HCT116 (cell line): ENCODE measurements at regions of chr9 and their contacts with region 1.

Region 1: DNA sequence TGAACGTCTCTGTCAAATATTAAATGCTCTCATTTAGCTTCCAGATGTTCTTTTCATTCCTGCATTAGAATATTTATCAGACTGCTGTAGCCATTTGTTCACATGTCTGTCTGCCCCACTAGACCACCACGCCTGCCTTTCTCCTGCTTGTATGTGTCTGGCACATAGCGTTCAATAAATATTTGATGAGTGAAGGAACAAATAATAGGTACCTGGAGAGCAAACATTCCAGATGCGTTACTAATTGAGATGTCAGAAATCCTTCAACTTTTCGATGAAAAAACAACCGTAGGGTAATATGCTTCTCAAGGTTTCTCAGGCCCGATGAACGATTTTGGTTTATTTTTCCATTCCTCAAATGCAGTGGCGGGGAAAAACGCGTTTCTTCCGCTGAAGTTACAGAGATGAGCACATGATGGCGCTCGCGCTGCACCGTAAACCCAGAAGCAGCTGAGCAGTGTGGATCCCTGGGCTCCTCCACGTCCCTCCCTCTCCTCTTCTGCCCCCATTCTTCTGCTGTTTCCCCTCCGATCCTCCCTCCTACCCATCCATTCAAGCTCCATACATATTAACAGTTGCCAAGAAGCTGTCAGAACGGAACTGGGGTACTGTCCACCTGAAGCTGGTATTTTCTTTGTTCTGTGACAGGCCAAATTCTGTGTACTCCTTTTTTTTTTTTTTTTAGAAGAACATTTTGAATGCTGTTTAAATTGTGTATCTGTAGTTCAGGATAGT is 245.4 kb downstream of the MPDZ start:
- DNase-seq: peak; percentile 51
- ATAC-seq: peak; percentile 97
- H3K4me3 ChIP-seq: no peak overlapping the region
- H3K27ac ChIP-seq: no peak overlapping the region
- H3K4me1 ChIP-seq: no peaks in the 10 kb centered on the region; a peak in 1 of 4 replicates
- H3K27me3 ChIP-seq: peaks cover 4% of the 10 kb centered on the region; the same call in 1 of the 2 replicates
- CTCF ChIP-seq: peak; percentile 46 to 78 (median 66); a peak in 5 of 6 replicates
- POLR2A ChIP-seq: no peak
- RAD21 ChIP-seq: peak; percentile 86

Region 2: GRCh38 chr9:12702160-12702758 is 331.9 kb before region 1 on chr9:
- CTCF ChIA-PET with region 1: no interaction called
- POLR2A ChIA-PET with region 1: no interaction called
- RAD21 ChIA-PET with region 1: no interaction called
- intact Hi-C with region 1: loop called (anchors 5 kb)
- DNase-seq: peak; percentile 56
- ATAC-seq: peak; percentile 91
- H3K4me3 ChIP-seq: no peak overlapping the region
- H3K27ac ChIP-seq: no peak overlapping the region
- H3K4me1 ChIP-seq: no peaks in the 10 kb centered on the region
- H3K27me3 ChIP-seq: 0 out of 2 replicates have a peak, but pooled peaks cover 4% of the 10 kb centered on the region
- CTCF ChIP-seq: peak; percentile 59 to 77 (median 59); a peak in 5 of 6 replicates
- POLR2A ChIP-seq: no peak
- RAD21 ChIP-seq: peak; percentile 82

Region 3: DNA sequence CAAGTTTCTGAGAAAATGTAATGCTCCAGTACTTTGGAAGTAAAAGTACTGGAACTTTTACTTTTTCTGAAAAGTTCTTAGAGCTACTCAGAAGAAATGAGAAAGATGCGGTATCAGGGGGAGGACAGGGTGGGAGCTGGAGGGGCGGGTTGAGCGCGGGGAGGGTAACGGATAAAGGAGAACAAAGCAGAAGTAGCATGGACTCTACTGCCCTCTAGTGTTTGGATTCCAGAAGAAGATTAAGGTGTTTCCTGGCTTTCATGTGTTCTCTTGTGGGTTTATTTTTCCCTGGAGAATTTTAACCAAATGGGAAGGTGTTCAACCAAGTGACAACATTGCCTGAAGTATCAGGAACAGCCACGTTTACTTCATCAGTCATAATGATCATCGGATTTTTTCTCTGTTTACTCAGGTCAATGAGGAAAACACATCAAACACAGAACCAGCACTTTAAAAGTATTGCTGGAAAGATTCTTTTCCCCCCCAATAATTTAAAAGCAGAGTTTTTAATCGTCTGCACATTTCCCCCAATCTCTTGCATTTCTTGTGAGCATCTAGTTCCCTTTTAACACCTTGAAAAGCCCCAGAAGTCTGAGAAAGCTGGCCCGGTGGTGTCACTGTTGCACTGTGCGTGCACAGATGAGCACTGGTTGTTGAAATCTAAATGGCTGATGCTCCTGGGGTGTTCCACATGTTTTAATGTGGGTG is 54.7 kb after region 1 on chr9:
- CTCF ChIA-PET with region 1: interaction called, 4 read pairs
- POLR2A ChIA-PET with region 1: no interaction called
- RAD21 ChIA-PET with region 1: no interaction called
- intact Hi-C with region 1: loop called (anchors 2 kb)
- DNase-seq: peak; percentile 41
- ATAC-seq: peak; percentile 81
- H3K4me3 ChIP-seq: no peak overlapping the region
- H3K27ac ChIP-seq: no peak overlapping the region
- H3K4me1 ChIP-seq: no peaks in the 10 kb centered on the region
- H3K27me3 ChIP-seq: peaks cover 17% of the 10 kb centered on the region; the same call in 1 of the 2 replicates
- CTCF ChIP-seq: peak; percentile 27 to 73 (median 54); a peak in 5 of 6 replicates
- POLR2A ChIP-seq: no peak
- RAD21 ChIP-seq: peak; percentile 66

Region 4: GRCh38 chr9:13427587-13427986 is 393.5 kb after region 1 on chr9:
- CTCF ChIA-PET with region 1: interaction called, 9 read pairs
- POLR2A ChIA-PET with region 1: no interaction called
- RAD21 ChIA-PET with region 1: no interaction called
- intact Hi-C with region 1: loop called (anchors 10 kb)
- DNase-seq: no peak
- ATAC-seq: no peak
- H3K4me3 ChIP-seq: no peak overlapping the region
- H3K27ac ChIP-seq: no peak overlapping the region
- H3K4me1 ChIP-seq: no peaks in the 10 kb centered on the region
- H3K27me3 ChIP-seq: no peaks in the 10 kb centered on the region
- CTCF ChIP-seq: peak; percentile 33 to 69 (median 47); a peak in 5 of 6 replicates
- POLR2A ChIP-seq: no peak
- RAD21 ChIP-seq: peak; percentile 62

Region 5: DNA sequence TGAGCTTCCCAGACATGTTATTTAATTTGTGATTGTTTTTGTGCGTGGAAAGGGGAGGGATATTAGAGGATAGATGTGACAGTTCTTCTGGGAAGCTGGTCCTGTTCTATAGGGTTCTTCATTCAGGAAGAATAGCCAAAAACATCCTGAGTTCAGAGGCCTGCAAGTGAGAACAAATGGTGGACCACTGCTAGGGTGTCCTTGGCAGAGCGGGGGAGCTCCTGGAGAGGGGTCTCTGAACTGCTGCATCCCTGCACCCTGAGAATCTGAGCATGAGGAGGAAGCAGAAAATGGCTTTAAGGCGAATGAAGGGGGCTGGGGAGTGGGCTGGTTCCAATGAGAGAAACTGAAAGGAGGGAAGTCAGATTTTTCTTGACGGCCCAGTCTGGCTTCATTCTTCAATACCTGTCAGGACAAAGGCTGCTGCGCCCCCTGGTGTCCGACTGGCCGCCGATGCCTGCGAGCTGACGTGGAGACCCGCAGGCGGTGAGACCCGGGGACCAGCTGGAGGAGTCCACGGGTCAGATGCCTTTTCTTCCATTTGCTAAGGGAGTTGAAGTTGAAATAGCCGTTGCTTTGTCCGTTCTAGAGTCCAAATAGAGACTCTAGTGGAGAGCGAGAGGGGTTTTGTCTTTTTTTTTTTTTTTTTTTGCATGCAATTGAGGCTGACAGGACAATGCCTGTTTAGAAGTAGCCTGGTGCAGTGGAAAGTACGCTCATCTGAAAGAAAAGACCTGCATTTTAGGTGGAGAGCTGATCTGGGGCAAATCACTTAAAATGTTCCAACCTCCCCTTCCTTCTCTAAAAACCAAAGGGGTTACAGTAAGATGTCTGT is 1319.3 kb after region 1 on chr9:
- CTCF ChIA-PET with region 1: no interaction called
- POLR2A ChIA-PET with region 1: no interaction called
- RAD21 ChIA-PET with region 1: no interaction called
- intact Hi-C with region 1: loop called (anchors 1 kb)
- DNase-seq: peak; percentile 50
- ATAC-seq: peak; percentile 97
- H3K4me3 ChIP-seq: no peak overlapping the region
- H3K27ac ChIP-seq: no peak overlapping the region
- H3K4me1 ChIP-seq: no peaks in the 10 kb centered on the region
- H3K27me3 ChIP-seq: no peaks in the 10 kb centered on the region
- CTCF ChIP-seq: peak; percentile 48 to 88 (median 87); a peak in 5 of 6 replicates
- POLR2A ChIP-seq: no peak
- RAD21 ChIP-seq: peak; percentile 84

Region 6: DNA sequence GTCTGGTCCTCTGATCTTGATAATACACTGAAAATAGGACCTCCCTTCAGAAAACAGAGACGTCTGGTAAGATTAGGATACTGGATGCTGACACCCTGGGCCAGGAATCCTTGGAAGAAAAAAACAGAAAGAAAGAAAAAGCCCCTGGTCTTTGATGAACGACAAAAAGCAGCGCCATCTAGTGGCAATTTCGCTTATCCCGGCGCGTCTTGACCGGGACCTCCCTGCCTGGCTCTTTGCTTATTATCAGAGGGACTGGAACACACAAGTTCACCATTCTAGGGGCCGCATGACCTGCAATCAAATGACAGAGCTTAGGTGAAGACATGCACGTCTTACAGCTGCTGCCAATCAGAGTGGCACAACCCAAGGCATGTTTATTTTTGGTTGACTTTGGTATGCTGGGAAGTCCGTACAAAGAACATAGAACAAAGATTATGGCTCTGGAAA is 1394.7 kb after region 1 on chr9:
- CTCF ChIA-PET with region 1: interaction called, 4 read pairs
- POLR2A ChIA-PET with region 1: no interaction called
- RAD21 ChIA-PET with region 1: no interaction called
- intact Hi-C with region 1: loop called (anchors 2 kb)
- DNase-seq: peak; percentile 57
- ATAC-seq: peak; percentile 90
- H3K4me3 ChIP-seq: no peak overlapping the region
- H3K27ac ChIP-seq: no peak overlapping the region
- H3K4me1 ChIP-seq: 0 out of 4 replicates have a peak, but pooled peaks cover 0 to 4% of the 10 kb centered on the region in 2 experiments
- H3K27me3 ChIP-seq: no peaks in the 10 kb centered on the region
- CTCF ChIP-seq: peak; percentile 50 to 84 (median 72); a peak in 5 of 6 replicates
- POLR2A ChIP-seq: no peak
- RAD21 ChIP-seq: peak; percentile 55